ENCODE measurements at regions of chr3 and their contacts with region 1.

Region 1: GRCh38 chr3:180594631-180595558 is 7.1 kb upstream of the TTC14 start:
- DNase-seq: peak; percentile 75
- ATAC-seq: peak; percentile 93
- H3K4me3 ChIP-seq: no peak overlapping the region
- H3K27ac ChIP-seq: no peak overlapping the region
- H3K4me1 ChIP-seq: peaks cover 11% of the 10 kb centered on the region
- H3K27me3 ChIP-seq: no peaks in the 10 kb centered on the region
- CTCF ChIP-seq: peak; percentile 90

Region 2: DNA sequence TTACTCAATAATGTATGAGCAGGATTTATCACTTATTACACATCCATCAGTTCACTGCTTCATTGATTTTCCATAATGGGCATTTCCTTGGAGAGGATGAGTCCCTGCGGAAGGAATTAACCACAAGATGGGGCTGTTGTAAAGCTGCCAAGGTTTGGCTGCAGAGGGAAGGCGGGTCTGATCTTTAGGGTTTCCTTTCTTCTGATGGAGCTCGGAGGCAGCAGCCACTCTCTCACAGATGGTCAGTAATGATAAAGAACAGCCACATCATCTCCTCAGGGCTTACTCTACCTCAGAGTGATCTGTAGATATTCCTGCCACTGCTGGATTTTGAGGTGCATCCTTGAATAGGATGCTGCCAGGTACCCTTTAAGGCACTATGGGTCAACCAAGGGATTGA is 826.8 kb before region 1 on chr3:
- CTCF ChIA-PET with region 1: interaction called, 5 read pairs
- POLR2A ChIA-PET with region 1: no interaction called
- intact Hi-C with region 1: loop called (anchors 1 kb)
- DNase-seq: peak; percentile 90
- ATAC-seq: peak; percentile 83
- H3K4me3 ChIP-seq: no peak overlapping the region
- H3K27ac ChIP-seq: no peak overlapping the region
- H3K4me1 ChIP-seq: peaks cover 18% of the 10 kb centered on the region
- H3K27me3 ChIP-seq: no peaks in the 10 kb centered on the region
- CTCF ChIP-seq: peak; percentile 87

Region 3: GRCh38 chr3:179929091-179929529 is 665.8 kb before region 1 on chr3:
- CTCF ChIA-PET with region 1: interaction called, 17 read pairs
- POLR2A ChIA-PET with region 1: no interaction called
- intact Hi-C with region 1: loop called (anchors 1 kb)
- DNase-seq: peak; percentile 73
- ATAC-seq: peak; percentile 71
- H3K4me3 ChIP-seq: no peak overlapping the region
- H3K27ac ChIP-seq: no peak overlapping the region
- H3K4me1 ChIP-seq: no peaks in the 10 kb centered on the region
- H3K27me3 ChIP-seq: no peaks in the 10 kb centered on the region
- CTCF ChIP-seq: peak; percentile 92

Region 4: GRCh38 chr3:180036671-180037455 is 558.0 kb before region 1 on chr3 and contains the start of gene PEX5L:
- CTCF ChIA-PET with region 1: no interaction called
- POLR2A ChIA-PET with region 1: no interaction called
- intact Hi-C with region 1: loop called (anchors 10 kb)
- DNase-seq: peak; percentile 77
- ATAC-seq: peak; percentile 95
- H3K4me3 ChIP-seq: peak within 1 kb of the TSS; percentile 65
- H3K27ac ChIP-seq: no peak within 1 kb of the TSS
- H3K4me1 ChIP-seq: no peaks in the 10 kb centered on the region
- H3K27me3 ChIP-seq: no peaks in the 10 kb centered on the region
- CTCF ChIP-seq: no peak
- total RNA-seq, gene PEX5L: 0.69 and 0.86 TPM in 2 replicates

Region 5: GRCh38 chr3:180358179-180358578 is 236.7 kb before region 1 on chr3:
- CTCF ChIA-PET with region 1: interaction called, 4 read pairs
- POLR2A ChIA-PET with region 1: no interaction called
- intact Hi-C with region 1: loop called (anchors 1 kb)
- DNase-seq: peak; percentile 92
- ATAC-seq: peak; percentile 97
- H3K4me3 ChIP-seq: no peak overlapping the region
- H3K27ac ChIP-seq: peak overlapping the region; percentile 61
- H3K4me1 ChIP-seq: peaks cover 24% of the 10 kb centered on the region
- H3K27me3 ChIP-seq: no peaks in the 10 kb centered on the region
- CTCF ChIP-seq: peak; percentile 52

Region 6: GRCh38 chr3:180421221-180421620 is 173.7 kb before region 1 on chr3:
- CTCF ChIA-PET with region 1: no interaction called
- POLR2A ChIA-PET with region 1: no interaction called
- intact Hi-C with region 1: loop called (anchors 2 kb)
- DNase-seq: peak; percentile 33
- ATAC-seq: peak; percentile 11; the same call in 1 of the 2 replicates
- H3K4me3 ChIP-seq: no peak overlapping the region; the same call in 1 of the 2 replicates
- H3K27ac ChIP-seq: peak overlapping the region; percentile 92
- H3K4me1 ChIP-seq: peaks cover 52% of the 10 kb centered on the region
- H3K27me3 ChIP-seq: no peaks in the 10 kb centered on the region
- CTCF ChIP-seq: no peak

Region 7: DNA sequence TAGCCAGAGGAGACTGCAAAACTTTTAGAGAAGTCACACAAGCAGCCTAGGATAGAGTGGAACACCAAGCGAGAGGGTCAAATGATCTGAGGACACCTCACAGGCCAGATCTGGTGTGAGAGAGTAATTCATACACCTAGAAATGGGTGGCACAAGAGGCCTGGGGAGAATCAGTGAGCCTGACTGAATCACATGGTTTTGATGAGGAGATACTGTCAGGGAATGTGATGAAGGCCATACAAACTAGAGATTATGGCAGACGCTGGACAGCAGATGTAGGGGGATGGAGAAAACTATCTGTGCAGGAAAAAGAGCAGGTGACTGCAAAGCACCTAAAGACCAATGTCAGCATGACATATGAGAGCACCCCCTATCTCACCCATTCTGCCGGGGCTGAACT is 97.9 kb before region 1 on chr3:
- CTCF ChIA-PET with region 1: no interaction called
- POLR2A ChIA-PET with region 1: no interaction called
- intact Hi-C with region 1: no loop called
- DNase-seq: no peak
- ATAC-seq: no peak
- H3K4me3 ChIP-seq: no peak overlapping the region
- H3K27ac ChIP-seq: no peak overlapping the region
- H3K4me1 ChIP-seq: no peaks in the 10 kb centered on the region
- H3K27me3 ChIP-seq: no peaks in the 10 kb centered on the region
- CTCF ChIP-seq: no peak

Region 8: DNA sequence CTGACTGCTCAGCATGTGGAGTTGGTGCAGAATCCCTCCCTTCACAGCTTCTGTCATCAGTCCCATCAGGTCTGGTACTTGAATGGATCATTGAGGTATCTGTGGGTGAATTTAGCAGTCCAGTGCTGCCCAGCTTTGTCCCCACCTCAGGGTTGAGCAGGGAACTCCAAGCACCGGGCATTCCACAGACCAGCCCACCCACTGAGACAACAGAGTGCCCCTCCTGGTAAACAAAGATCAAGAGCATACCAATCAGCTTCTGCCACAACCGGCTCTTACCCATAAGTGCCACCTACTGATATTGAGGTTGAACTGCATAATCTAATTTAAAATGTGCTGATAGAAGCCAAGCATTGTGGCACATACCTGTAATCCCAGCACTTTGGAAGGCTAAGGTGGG is 260.5 kb after region 1 on chr3:
- CTCF ChIA-PET with region 1: no interaction called
- POLR2A ChIA-PET with region 1: no interaction called
- intact Hi-C with region 1: no loop called
- DNase-seq: peak; percentile 29
- ATAC-seq: peak; percentile 64
- H3K4me3 ChIP-seq: no peak overlapping the region
- H3K27ac ChIP-seq: no peak overlapping the region
- H3K4me1 ChIP-seq: no peaks in the 10 kb centered on the region
- H3K27me3 ChIP-seq: peaks cover 42% of the 10 kb centered on the region
- CTCF ChIP-seq: peak; percentile 57